ENCODE measurements at regions of chr3 and their contacts with region 1.

Region 1: GRCh38 chr3:39288300-39288808 is 8.5 kb upstream of the CX3CR1 start:
- DNase-seq: peak; percentile 83 to 95
- ATAC-seq: peak; percentile 94 to 97
- H3K4me3 ChIP-seq: no peak overlapping the region
- H3K27ac ChIP-seq: no peak overlapping the region
- H3K4me1 ChIP-seq: no peaks in the 10 kb centered on the region; the same call in 2 of the 3 replicates
- CTCF ChIP-seq: peak; percentile 89
- EP300 ChIP-seq: no peak
- POLR2A ChIP-seq: no peak
- RAD21 ChIP-seq: peak; percentile 98 to 99

Region 2: GRCh38 chr3:38925351-38925750 is 363.0 kb before region 1 on chr3:
- CTCF ChIA-PET with region 1: no interaction called
- POLR2A ChIA-PET with region 1: no interaction called
- DNase-seq: no peak
- ATAC-seq: no peak
- H3K4me3 ChIP-seq: no peak overlapping the region
- H3K27ac ChIP-seq: no peak overlapping the region
- H3K4me1 ChIP-seq: no peaks in the 10 kb centered on the region
- CTCF ChIP-seq: no peak
- EP300 ChIP-seq: no peak
- POLR2A ChIP-seq: no peak
- RAD21 ChIP-seq: no peak

Region 3: GRCh38 chr3:39028546-39028945 is 259.8 kb before region 1 on chr3:
- CTCF ChIA-PET with region 1: interaction called, 15 read pairs
- POLR2A ChIA-PET with region 1: no interaction called
- DNase-seq: no peak
- ATAC-seq: no peak
- H3K4me3 ChIP-seq: no peak overlapping the region
- H3K27ac ChIP-seq: no peak overlapping the region
- H3K4me1 ChIP-seq: no peaks in the 10 kb centered on the region
- CTCF ChIP-seq: no peak
- EP300 ChIP-seq: no peak
- POLR2A ChIP-seq: no peak
- RAD21 ChIP-seq: no peak

Region 4: GRCh38 chr3:39086144-39086543 is 202.2 kb before region 1 on chr3:
- CTCF ChIA-PET with region 1: interaction called, 22 read pairs
- POLR2A ChIA-PET with region 1: no interaction called
- DNase-seq: no peak
- ATAC-seq: peak in 1 of 2 experiments; percentile 41; a peak in 2 of 6 replicates
- H3K4me3 ChIP-seq: no peak overlapping the region
- H3K27ac ChIP-seq: no peak overlapping the region
- H3K4me1 ChIP-seq: no peaks in the 10 kb centered on the region
- CTCF ChIP-seq: no peak
- EP300 ChIP-seq: no peak
- POLR2A ChIP-seq: no peak
- RAD21 ChIP-seq: no peak

Region 5: DNA sequence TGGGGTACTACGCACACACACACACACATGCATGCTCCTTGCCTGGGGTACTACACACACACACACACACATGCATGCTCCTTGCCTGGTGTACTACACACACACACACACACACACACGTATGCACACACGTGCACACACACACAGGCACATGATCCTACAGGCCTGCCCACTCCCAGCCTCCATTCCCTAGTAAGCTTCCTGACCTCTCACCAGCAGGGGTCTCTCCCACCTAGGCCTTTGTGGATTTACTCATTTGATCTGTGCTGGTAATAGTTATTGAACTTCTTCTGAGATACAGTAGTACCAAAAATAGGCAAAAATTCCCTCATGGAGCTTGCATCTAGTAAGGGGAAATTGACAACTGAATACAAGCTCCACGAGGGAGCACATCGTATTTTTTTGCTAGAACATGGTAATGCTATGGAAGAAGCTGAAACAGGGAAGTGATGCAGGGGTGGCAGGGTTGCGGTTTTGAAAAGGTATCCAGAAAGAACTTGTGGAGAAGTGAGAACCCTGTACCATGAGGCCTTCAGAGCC is 161.8 kb before region 1 on chr3:
- CTCF ChIA-PET with region 1: interaction called, 383 read pairs
- POLR2A ChIA-PET with region 1: interaction called, 3 read pairs
- DNase-seq: peak in 1 of 2 experiments; percentile 72
- ATAC-seq: peak; percentile 73 to 88
- H3K4me3 ChIP-seq: no peak overlapping the region
- H3K27ac ChIP-seq: peak overlapping the region in 1 of 2 experiments; percentile 27; a peak in 1 of 6 replicates
- H3K4me1 ChIP-seq: peaks cover 18% of the 10 kb centered on the region
- CTCF ChIP-seq: peak; percentile 64
- EP300 ChIP-seq: no peak
- POLR2A ChIP-seq: no peak
- RAD21 ChIP-seq: peak; percentile 78 to 92

Region 6: DNA sequence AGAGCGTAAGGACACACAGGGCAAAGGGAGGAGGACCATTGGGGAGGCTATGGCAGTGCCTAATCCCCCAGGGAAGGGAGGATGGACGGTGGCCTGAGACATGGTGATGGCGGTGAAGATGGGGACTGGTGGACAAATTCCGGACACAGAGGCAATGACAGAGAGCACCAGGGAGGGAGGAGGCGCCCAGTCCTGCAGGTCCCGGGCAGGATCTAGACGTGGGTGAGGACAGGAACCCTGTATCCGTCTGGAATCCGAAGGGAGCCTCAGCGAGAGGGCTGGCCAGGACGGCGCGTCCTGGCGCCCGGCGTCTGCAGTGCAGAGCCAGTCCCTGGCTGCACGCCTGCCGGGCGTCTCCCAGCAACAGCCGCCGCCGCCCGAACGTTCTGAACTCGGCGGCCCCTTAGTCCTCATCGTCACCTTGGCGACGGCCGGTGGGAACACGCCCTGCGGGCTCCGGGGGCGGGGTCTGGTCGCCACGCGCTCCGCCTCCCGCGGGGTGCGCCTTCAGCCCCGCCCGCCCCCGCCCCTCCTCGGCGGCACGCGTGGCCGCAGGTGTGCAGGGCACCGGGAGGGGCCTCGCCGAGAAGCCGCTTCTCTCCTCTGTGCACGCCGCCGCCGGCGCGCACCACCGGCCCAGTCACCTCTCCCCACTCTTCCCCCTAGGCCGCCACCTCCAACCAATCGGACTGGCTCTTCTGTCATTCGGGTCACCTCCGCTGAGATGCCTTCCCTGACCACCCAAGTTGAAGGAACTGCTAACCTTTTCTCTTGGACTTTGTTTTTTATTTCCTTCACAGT is 107.6 kb before region 1 on chr3:
- CTCF ChIA-PET with region 1: interaction called, 459 read pairs
- POLR2A ChIA-PET with region 1: no interaction called
- DNase-seq: peak; percentile 76
- ATAC-seq: peak; percentile 77 to 86
- H3K4me3 ChIP-seq: peak overlapping the region; percentile 42
- H3K27ac ChIP-seq: peak overlapping the region; percentile 71 to 74
- H3K4me1 ChIP-seq: peaks cover 29% of the 10 kb centered on the region
- CTCF ChIP-seq: no peak
- EP300 ChIP-seq: no peak
- POLR2A ChIP-seq: no peak
- RAD21 ChIP-seq: 0 out of 5 replicates have a peak, but pooled peaks of 1 of the 2 experiments have one; percentile 7

Region 7: DNA sequence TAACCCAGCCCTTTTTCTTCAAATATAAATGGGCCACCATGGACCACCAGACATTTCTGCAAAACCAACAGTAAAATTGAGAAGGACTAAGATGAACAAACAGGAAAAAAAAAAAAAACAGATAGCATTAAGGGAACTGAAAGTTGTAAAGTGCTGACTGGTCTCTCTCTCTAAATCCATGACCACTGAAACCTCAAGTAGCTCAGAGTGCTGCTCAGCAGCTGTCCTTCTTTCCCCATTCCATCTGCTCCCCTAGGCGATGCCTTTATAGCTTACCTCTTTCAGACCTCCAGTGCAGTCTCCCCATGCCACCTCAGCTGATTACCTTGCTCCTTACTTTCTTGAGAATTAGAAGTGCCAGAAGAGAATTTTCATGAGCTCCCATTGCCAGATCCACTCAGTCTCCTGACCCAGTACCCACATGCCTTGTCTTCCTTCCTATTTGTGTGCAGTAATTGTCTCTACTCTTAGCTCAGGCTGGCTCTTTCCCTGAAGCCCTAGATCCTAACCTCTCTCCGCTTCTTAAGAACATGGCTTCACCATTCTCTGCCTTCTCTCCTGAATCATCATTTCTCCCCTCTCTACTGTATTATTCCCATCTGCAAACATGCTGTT is 72.1 kb before region 1 on chr3:
- CTCF ChIA-PET with region 1: interaction called, 40 read pairs
- POLR2A ChIA-PET with region 1: no interaction called
- DNase-seq: no peak
- ATAC-seq: no peak
- H3K4me3 ChIP-seq: no peak overlapping the region
- H3K27ac ChIP-seq: no peak overlapping the region
- H3K4me1 ChIP-seq: no peaks in the 10 kb centered on the region
- CTCF ChIP-seq: no peak
- EP300 ChIP-seq: no peak
- POLR2A ChIP-seq: no peak
- RAD21 ChIP-seq: no peak

Region 8: DNA sequence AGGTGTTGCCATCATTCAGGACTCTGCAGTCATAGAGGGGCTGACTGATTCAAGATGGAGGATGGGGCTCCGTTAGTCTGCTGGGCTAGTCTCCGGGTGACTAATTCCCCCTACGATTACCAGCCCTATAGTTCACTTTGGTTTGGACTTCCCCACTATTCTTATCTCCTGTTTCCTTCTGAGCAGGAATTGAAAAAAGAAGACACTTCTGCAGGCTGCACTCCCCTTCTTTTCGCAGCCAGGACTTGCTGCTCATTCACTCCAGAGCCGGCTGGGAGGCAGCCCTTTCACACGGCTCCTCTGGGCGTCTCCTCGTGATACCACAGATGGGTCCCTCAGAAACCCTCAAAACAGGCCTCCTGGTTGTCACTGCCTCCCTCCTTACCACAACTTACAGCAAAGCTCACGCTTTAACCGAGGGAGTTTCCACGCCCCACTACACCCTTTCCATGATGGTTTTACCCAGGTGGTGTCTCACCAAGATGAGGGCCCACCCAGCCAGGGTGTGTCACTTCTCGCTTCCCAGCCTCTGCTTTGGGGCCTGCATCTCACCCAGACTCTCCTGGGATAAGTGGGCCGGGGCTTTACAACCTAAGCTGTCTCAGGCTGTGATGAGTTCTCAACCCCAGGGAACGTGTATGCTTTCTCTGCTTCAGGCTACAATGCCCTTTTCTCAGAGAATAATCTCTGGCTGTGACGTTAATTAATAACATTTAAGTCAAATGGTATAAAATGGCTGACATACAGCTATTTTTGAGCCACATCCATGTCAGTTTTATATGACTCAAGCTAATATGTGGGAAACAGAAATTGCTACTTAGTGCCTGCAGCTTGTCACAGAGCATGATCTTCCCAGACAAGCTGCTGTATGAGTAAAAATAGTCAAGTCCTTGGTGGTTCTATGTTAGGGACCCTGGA is 20.5 kb before region 1 on chr3:
- CTCF ChIA-PET with region 1: interaction called, 25 read pairs
- POLR2A ChIA-PET with region 1: no interaction called
- DNase-seq: no peak
- ATAC-seq: no peak
- H3K4me3 ChIP-seq: no peak overlapping the region
- H3K27ac ChIP-seq: no peak overlapping the region
- H3K4me1 ChIP-seq: no peaks in the 10 kb centered on the region
- CTCF ChIP-seq: no peak
- EP300 ChIP-seq: no peak
- POLR2A ChIP-seq: no peak
- RAD21 ChIP-seq: no peak